PC-9 (cell line): ENCODE measurements at regions of chr3 and their contacts with region 1.

Region 1: GRCh38 chr3:169149349-169149890 is 514.1 kb downstream of the MECOM start:
- DNase-seq: peak; percentile 73 to 95
- H3K4me3 ChIP-seq: peak overlapping the region; percentile 67
- H3K27ac ChIP-seq: no peak overlapping the region
- H3K4me1 ChIP-seq: peaks cover 25% of the 10 kb centered on the region
- H3K27me3 ChIP-seq: no peaks in the 10 kb centered on the region
- CTCF ChIP-seq: peak; percentile 85

Region 2: GRCh38 chr3:168878655-168879054 is 270.8 kb before region 1 on chr3:
- CTCF ChIA-PET with region 1: no interaction called
- POLR2A ChIA-PET with region 1: no interaction called
- intact Hi-C with region 1: loop called (anchors 2 kb)
- DNase-seq: peak in 1 of 2 experiments; percentile 65
- H3K4me3 ChIP-seq: no peak overlapping the region
- H3K27ac ChIP-seq: peak overlapping the region; percentile 61
- H3K4me1 ChIP-seq: peaks cover 34% of the 10 kb centered on the region
- H3K27me3 ChIP-seq: no peaks in the 10 kb centered on the region
- CTCF ChIP-seq: no peak

Region 3: DNA sequence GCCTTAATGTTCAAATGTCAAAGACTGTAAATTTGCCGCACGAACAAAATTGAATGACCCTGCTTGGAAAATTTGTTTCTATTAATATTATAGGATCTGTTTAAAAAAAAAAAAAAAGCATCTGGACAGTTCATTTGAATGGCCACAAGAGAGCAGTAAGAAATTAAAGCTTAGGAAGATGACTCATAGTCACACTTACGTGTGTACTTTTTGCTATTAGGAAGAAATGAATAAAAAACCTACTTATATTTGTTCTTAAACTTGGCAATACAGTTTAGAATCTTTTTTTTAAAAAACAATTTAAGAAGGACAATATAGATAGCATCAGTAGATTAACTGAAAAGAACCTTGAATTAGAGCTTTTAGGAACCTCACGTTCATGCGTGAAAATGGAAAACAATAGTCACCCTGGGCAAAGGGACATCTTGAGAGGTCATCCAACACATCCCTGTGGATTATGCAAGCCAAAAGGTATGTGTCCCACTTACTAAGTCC is 107.7 kb before region 1 on chr3:
- CTCF ChIA-PET with region 1: interaction called, 4 read pairs
- POLR2A ChIA-PET with region 1: no interaction called
- intact Hi-C with region 1: loop called (anchors 1 kb)
- DNase-seq: peak in 1 of 2 experiments; percentile 66
- H3K4me3 ChIP-seq: no peak overlapping the region
- H3K27ac ChIP-seq: no peak overlapping the region
- H3K4me1 ChIP-seq: peaks cover 25% of the 10 kb centered on the region
- H3K27me3 ChIP-seq: no peaks in the 10 kb centered on the region
- CTCF ChIP-seq: peak; percentile 78

Region 4: DNA sequence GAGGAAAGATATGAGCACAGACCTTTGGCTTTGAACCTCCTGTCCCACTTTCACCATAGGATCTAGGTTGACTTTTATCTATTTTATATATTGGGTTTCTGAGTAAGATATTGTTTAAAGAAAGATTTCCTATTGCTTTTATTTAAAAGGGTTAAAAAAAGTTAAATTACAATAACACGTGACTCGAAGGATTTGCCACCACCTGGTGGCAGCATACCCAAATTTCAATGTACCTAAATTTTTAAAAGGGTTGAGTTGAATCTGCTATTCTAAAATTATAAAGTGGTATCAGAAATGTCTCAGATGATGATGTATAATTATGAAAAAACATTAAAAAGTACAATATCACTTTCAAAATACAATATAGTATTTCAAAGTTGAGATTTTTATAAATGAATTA is 145.7 kb after region 1 on chr3:
- CTCF ChIA-PET with region 1: interaction called, 4 read pairs
- POLR2A ChIA-PET with region 1: no interaction called
- intact Hi-C with region 1: loop called (anchors 1 kb)
- DNase-seq: no peak
- H3K4me3 ChIP-seq: no peak overlapping the region
- H3K27ac ChIP-seq: no peak overlapping the region
- H3K4me1 ChIP-seq: peaks cover 11% of the 10 kb centered on the region
- H3K27me3 ChIP-seq: no peaks in the 10 kb centered on the region
- CTCF ChIP-seq: peak; percentile 80

Region 5: DNA sequence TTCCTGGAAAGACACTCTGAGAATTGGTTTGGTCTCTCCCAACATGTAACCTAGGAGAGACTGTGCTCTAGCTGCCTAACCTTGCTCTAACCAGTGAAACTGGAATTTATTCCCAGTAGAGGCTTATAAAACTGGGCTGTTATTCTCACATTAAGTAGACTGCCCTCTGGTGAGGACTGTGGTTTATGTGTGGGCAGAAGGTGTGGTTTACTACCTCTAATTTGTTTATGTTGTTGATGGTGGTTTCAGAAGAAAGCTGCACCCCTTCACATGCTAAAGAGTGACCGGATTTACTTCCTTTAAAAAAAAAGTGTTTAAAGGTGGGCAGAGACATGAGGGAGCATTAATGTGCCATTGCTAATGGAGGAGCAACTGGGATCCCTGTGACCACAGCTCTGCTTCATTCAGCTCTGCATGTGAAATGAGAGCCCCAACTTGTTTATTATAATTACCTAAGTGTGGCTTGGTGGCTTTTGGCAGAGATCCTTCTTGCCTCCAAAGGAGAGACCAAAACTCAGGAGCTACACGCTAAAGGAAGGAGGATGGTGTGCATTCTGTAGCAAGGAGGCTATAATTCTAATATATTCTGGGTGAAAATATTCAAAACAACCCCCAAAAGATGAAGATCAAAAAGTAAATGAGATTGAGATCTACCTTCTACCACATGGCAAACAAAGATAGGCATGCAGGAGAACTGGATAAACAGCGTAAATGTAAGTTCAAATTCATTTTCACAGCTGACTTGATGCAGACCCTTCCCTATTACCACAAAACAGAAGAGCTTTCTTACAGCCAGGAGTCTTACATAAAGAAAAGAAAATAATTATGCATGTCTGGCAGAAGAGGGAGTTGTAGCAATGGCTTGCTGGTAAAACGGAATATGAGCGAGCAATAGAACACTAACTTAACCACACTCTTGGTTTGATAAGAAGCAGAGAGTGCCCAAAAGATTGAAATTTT is 241.1 kb after region 1 on chr3:
- CTCF ChIA-PET with region 1: interaction called, 17 read pairs
- POLR2A ChIA-PET with region 1: interaction called, 4 read pairs
- intact Hi-C with region 1: loop called (anchors 1 kb)
- DNase-seq: peak; percentile 35 to 85
- H3K4me3 ChIP-seq: peak overlapping the region; percentile 9; the same call in 1 of the 2 replicates
- H3K27ac ChIP-seq: peak overlapping the region; percentile 26
- H3K4me1 ChIP-seq: peaks cover 30% of the 10 kb centered on the region
- H3K27me3 ChIP-seq: no peaks in the 10 kb centered on the region
- CTCF ChIP-seq: peak; percentile 44

Region 6: DNA sequence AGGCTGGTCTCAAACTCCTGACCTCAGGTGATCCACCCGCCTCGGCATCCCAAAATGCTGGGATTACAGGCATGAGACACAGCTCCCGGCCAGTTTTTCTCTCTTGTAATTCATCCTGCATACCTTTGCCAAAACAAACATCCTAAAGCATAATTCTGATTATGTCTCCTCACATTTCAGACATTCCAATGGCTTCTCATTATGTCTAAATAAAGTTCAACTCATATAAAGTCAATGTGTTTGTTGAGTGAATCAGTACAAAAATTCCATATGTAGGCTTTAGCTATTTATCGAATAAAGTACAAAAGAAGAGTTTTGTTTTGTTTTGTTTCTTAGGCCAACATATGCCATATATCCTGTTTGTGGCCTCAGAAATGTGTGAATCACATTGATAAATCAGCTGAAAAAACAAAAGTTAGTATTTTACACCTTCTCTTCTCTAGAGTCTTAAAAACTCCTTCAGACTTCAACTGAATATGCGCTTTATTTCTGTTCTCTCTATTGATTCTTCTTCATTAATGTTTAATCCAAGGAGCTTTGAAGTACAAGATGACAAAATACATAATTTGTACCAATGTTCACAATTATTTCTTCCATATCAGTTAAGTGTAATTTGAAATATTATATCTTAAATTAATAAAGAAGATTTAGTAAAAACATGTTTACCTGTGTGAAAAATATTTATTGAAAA is 348.3 kb after region 1 on chr3:
- CTCF ChIA-PET with region 1: no interaction called
- POLR2A ChIA-PET with region 1: no interaction called
- intact Hi-C with region 1: loop called (anchors 5 kb)
- DNase-seq: peak; percentile 28 to 99
- H3K4me3 ChIP-seq: no peak overlapping the region
- H3K27ac ChIP-seq: peak overlapping the region; percentile 56
- H3K4me1 ChIP-seq: peaks cover 20% of the 10 kb centered on the region
- H3K27me3 ChIP-seq: no peaks in the 10 kb centered on the region
- CTCF ChIP-seq: no peak

Region 7: GRCh38 chr3:169744366-169745054 is 595.1 kb after region 1 on chr3:
- CTCF ChIA-PET with region 1: no interaction called
- POLR2A ChIA-PET with region 1: interaction called, 4 read pairs
- intact Hi-C with region 1: loop called (anchors 5 kb)
- DNase-seq: no peak
- H3K4me3 ChIP-seq: no peak overlapping the region
- H3K27ac ChIP-seq: no peak overlapping the region
- H3K4me1 ChIP-seq: no peaks in the 10 kb centered on the region
- H3K27me3 ChIP-seq: no peaks in the 10 kb centered on the region; the same call in 1 of the 2 replicates
- CTCF ChIP-seq: peak; percentile 70